ENCODE measurements at regions of chr11 and their contacts with region 1.

Region 1: DNA sequence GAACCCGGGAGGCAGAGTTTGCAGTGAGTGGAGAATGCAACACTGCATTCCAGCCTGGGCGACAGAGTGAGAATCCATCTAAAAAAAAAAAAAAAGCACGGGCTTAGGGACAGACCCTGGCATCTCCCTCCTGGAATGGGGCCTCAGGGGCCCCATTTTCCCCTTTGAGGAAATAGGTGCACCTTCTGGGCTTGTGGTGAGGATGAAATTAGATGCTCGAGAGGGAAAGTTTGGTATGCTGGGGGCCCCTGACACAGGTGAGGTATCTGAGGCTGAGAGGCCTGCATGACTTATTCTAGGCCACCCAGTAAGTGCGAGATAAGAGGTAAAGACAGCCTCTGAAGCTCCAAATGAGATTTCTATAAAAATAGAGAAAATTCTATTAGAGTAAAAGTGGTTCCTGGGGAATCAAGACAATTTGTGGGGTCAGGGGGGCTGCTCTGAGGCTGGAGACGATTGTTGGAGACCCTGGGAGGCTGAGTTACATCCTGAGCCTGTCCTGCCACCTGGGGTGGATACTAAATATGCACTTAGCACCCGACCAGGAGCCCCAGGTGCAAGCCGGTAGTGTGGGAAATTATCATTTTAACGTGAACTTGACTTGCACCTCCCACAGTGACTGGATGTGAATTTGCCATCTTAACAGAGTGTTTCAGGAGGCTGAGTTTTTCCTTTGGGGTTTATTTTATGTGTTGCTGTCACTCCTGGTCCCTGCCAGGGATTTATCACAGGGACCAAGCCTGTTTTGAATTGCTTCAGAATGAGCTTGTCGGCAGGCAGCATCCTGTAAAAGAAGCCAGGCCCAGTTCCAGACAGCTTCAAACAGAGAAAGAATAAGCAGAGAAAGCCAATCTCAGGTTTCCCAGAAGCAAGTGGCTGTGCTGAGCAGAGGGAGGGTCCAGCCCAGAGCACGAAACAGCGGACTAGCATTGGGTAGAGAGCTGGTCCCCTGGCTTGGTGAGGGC is 48.4 kb upstream of the TSKU start:
- DNase-seq: no peak
- ATAC-seq: no peak
- H3K4me3 ChIP-seq: no peak overlapping the region
- H3K27ac ChIP-seq: no peak overlapping the region
- H3K4me1 ChIP-seq: no peaks in the 10 kb centered on the region
- H3K27me3 ChIP-seq: peaks cover 0 to 7% of the 10 kb centered on the region in 2 experiments; a peak in 2 of 4 replicates
- CTCF ChIP-seq: no peak
- EP300 ChIP-seq: no peak
- POLR2A ChIP-seq: no peak
- RAD21 ChIP-seq: no peak

Region 2: DNA sequence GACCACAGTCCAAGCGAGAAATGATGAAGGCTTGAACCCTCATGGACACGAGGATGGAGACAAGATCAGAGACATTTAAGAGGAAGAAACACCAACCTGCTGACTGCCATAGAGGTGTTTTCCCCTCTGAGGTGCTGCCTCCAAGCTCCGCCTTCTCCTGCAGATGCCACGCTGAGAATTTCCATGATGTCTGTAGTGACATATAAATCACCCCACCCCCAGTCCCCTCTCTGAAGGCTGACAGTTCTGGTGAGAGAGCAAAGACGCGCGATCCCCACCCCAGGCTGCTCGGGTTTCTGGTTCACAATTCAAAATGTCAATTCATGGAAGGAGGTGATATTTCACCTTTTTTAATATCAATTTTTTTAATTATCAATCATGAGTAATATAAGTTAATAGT is 92.4 kb before region 1 on chr11:
- CTCF ChIA-PET with region 1: no interaction called
- POLR2A ChIA-PET with region 1: no interaction called
- RAD21 ChIA-PET with region 1: no interaction called
- SMC1A ChIA-PET with region 1: no interaction called
- in situ Hi-C with region 1: no loop called
- intact Hi-C with region 1: no loop called
- DNase-seq: no peak
- ATAC-seq: peak; percentile 32
- H3K4me3 ChIP-seq: no peak overlapping the region
- H3K27ac ChIP-seq: no peak overlapping the region
- H3K4me1 ChIP-seq: peaks cover 11% of the 10 kb centered on the region
- H3K27me3 ChIP-seq: no peaks in the 10 kb centered on the region; a peak in 1 of 4 replicates
- CTCF ChIP-seq: no peak
- EP300 ChIP-seq: no peak
- POLR2A ChIP-seq: no peak
- RAD21 ChIP-seq: no peak

Region 3: DNA sequence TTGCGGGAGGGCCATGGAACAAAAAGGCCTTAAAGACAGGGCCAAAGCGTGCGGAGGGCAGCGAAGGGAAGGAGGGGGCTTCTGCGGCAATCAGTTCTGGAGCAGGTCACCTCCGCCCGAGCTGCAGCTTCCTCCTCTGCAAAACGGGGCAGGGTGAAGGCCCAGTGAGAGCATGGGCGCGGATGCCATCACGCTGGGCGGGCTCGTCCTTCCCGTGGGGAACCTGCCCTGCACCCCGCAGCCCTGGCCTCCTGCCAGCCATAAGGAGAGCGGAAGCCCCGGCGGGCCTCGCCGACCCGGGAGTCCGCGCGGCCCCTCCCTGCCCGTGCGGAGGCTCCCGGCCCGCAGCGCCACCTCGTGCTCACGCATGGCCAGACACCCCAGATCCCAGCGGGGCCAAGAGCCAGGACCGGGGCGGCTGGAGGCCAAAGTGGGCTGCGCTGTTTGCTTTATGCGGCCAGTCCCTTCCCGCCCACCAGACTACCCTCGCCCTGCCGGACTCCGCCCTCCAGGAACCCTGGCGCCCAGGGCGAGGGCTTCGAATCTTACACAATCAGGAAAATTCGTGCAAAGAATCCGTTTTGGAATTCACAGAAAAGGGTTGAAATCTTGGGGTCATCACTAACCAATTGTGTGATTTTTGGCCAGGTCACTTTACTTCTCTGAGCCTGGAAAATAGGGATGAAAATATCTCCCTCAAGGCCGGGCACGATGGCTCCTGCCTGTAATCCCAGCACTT is 64.5 kb after region 1 on chr11:
- CTCF ChIA-PET with region 1: interaction called, 36 read pairs
- POLR2A ChIA-PET with region 1: no interaction called
- RAD21 ChIA-PET with region 1: interaction called, 13 read pairs
- SMC1A ChIA-PET with region 1: interaction called, 10 read pairs
- in situ Hi-C with region 1: no loop called
- intact Hi-C with region 1: loop called (anchors 1 kb)
- DNase-seq: no peak
- ATAC-seq: peak; percentile 99
- H3K4me3 ChIP-seq: no peak overlapping the region
- H3K27ac ChIP-seq: no peak overlapping the region
- H3K4me1 ChIP-seq: no peaks in the 10 kb centered on the region
- H3K27me3 ChIP-seq: no peaks in the 10 kb centered on the region
- CTCF ChIP-seq: peak; percentile 78 to 91 (median 89)
- EP300 ChIP-seq: no peak
- POLR2A ChIP-seq: no peak
- RAD21 ChIP-seq: peak; percentile 74

Region 4: DNA sequence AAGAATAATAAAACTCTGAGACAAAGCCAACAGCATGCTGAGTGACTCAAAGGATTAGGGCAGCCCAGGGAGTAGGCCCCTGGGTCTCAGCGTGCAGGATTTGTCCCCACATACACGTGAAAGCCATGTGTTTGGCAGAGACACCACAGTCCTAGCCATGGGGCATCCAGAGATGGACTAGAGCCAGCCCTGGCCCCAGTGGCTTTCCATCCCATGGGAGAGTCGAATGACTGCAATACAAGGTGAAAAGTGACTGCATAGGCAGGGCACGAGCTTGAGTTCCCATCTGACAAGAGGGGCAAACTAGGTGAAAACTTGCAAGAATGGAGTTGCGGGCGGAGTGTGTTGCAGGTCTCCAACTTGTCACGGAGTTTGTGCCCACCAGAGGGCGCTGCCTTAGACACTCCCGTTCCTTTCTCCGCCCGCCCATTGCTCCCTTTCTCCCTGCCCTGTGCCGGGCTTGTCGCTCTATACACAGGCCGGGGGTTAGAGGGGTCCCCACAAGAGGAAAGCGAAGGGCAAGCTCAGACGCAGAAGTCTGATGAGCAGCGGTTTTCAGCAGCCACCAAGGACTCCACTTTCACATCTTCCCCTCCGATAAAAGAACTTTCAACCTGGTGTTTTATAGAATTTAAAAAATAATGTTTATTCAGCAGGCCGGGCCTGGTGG is 72.6 kb after region 1 on chr11:
- CTCF ChIA-PET with region 1: interaction called, 36 read pairs
- POLR2A ChIA-PET with region 1: no interaction called
- RAD21 ChIA-PET with region 1: no interaction called
- SMC1A ChIA-PET with region 1: no interaction called
- in situ Hi-C with region 1: no loop called
- intact Hi-C with region 1: loop called (anchors 1 kb)
- DNase-seq: no peak
- ATAC-seq: peak; percentile 91
- H3K4me3 ChIP-seq: no peak overlapping the region
- H3K27ac ChIP-seq: no peak overlapping the region
- H3K4me1 ChIP-seq: no peaks in the 10 kb centered on the region; the same call in 1 of the 2 replicates
- H3K27me3 ChIP-seq: peaks cover 0 to 2% of the 10 kb centered on the region in 2 experiments; a peak in 1 of 4 replicates
- CTCF ChIP-seq: peak; percentile 72 to 76 (median 72)
- EP300 ChIP-seq: no peak
- POLR2A ChIP-seq: no peak
- RAD21 ChIP-seq: peak; percentile 50; the same call in 1 of the 2 replicates

Region 5: DNA sequence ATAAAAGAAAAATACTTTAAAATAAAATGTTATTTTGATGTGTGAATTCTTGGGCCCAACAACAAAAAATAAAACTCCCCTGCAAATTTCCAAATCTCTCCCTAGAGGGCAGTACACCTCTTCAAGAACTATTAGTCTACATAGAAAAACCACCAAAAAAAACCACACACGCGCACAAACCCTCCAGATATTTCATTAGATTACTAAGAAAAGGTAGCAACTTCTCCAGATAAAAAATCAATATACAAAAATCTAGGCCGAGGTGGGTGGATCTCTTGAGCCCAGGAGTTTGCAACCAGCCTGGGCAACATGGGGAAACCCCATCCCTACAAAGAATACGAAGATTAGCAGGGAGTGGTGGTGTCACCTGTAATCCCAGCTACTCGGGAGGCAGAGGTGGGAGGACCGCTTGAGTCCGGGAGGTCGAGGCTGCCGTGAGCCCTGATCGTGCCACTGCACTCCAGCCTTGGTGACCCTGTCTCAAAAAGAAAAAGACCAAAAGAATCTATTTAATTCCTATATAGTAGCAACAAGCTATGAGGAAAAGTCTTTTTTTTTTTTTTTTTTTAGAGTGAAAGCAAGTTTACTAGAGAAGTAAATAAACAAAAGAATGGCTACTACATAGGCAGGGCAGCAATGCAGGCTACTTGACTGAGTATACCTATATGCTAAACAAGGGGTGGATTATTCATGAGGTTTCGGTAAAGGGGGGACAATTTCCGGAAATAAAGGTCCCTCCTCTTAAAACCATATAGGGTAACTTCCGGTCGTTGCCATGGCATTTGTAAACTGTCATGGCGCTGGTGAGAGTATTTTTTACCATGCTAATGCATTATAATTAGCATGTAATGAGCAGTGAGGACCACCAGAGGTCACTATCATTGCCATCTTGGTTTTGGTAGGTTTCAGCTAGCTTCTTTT is 312.5 kb after region 1 on chr11:
- CTCF ChIA-PET with region 1: no interaction called
- POLR2A ChIA-PET with region 1: no interaction called
- RAD21 ChIA-PET with region 1: no interaction called
- SMC1A ChIA-PET with region 1: no interaction called
- in situ Hi-C with region 1: no loop called
- intact Hi-C with region 1: loop called (anchors 10 kb)
- DNase-seq: peak; percentile 92
- ATAC-seq: peak; percentile 97
- H3K4me3 ChIP-seq: peak overlapping the region; percentile 15; the same call in 1 of the 2 replicates
- H3K27ac ChIP-seq: no peak overlapping the region
- H3K4me1 ChIP-seq: no peaks in the 10 kb centered on the region; the same call in 1 of the 2 replicates
- H3K27me3 ChIP-seq: no peaks in the 10 kb centered on the region; a peak in 1 of 4 replicates
- CTCF ChIP-seq: peak; percentile 45 to 70 (median 59); a peak in 5 of 6 replicates
- EP300 ChIP-seq: no peak; a peak in 1 of 4 replicates
- POLR2A ChIP-seq: no peak
- RAD21 ChIP-seq: peak; percentile 58

Region 6: DNA sequence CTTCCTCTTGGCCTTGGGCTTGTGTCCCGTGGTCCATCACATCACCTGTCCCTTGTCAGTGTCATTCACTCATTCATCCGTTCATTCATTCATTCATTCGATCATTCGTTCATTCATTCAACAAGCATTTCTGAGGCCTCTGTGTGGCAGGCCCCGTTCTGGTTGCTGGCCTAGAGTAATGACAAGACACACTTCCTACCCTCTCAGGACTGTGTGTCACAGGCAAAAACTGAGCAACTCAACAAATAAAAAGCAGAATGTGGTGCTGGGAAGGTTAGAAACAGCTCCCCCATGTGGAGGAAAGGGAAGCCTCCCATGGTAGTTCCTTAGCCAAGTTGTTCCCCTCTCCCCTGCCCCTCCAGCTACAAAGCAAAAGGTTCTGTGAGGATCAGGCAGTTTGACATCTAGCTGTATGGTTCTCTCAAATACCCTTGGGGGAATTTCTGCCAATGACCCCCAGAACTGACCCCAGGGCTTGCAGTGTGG is 366.4 kb after region 1 on chr11:
- CTCF ChIA-PET with region 1: no interaction called
- POLR2A ChIA-PET with region 1: no interaction called
- RAD21 ChIA-PET with region 1: no interaction called
- SMC1A ChIA-PET with region 1: no interaction called
- in situ Hi-C with region 1: no loop called
- intact Hi-C with region 1: loop called (anchors 10 kb)
- DNase-seq: no peak
- ATAC-seq: peak; percentile 66
- H3K4me3 ChIP-seq: no peak overlapping the region
- H3K27ac ChIP-seq: no peak overlapping the region
- H3K4me1 ChIP-seq: no peaks in the 10 kb centered on the region
- H3K27me3 ChIP-seq: no peaks in the 10 kb centered on the region; a peak in 1 of 4 replicates
- CTCF ChIP-seq: peak; percentile 34 to 56 (median 45)
- EP300 ChIP-seq: no peak
- POLR2A ChIP-seq: no peak
- RAD21 ChIP-seq: no peak; the same call in 1 of the 2 replicates